OCI-LY7 (cell line): ENCODE measurements at regions of chr2 and their contacts with region 1.

Region 1: GRCh38 chr2:27356382-27357181 is at the start of gene GTF3C2:
- DNase-seq: peak; percentile 99
- H3K4me3 ChIP-seq: peak within 1 kb of the TSS; percentile 77
- H3K27ac ChIP-seq: peak within 1 kb of the TSS; percentile 88
- H3K4me1 ChIP-seq: peaks cover 29% of the 10 kb centered on the region
- CTCF ChIP-seq: no peak
- total RNA-seq, gene GTF3C2: 54.2 and 56.9 TPM in 2 replicates

Region 2: DNA sequence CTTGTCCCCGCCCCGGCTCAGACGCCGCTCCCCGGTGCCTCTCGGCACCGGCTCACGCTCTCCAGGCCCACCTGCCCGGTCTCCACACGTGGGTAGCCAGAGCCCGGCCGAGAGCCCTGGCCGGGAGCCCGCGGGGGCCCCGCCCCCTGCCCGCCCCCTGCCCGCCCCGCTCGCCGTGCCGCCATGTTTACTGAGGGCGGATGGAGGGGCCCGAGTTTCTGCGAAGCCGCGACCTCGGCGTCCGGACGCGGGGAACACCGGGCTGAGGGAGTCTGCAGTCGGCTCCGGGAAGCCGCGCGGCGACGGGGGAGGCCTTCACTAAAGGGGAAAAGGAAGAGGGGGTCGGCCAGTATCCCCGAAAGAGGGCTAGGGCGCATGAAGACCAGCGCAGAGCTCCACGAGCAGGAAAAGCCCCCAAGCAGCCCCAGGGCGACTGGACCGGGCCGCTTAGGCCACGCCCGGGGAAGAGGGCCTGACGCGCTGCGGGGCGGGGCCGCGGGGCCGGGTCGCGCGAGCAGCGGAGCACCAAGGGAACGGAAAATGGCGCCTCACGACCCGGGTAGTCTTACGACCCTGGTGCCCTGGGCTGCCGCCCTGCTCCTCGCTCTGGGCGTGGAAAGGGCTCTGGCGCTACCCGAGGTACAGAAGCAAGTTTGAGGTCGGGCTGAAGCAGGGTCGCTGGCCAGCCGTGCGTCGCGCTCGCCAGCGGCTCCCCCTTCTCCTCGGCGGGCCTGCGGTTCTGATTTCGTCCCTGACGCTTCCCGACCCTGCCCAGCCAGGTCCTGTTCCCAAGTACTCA is 144.6 kb before region 1 on chr2 and contains the starts of genes ATRAID and SLC5A6:
- CTCF ChIA-PET with region 1: no interaction called
- POLR2A ChIA-PET with region 1: no interaction called
- intact Hi-C with region 1: loop called (anchors 5 kb)
- DNase-seq: peak; percentile 92
- H3K4me3 ChIP-seq: peak within 1 kb of the TSS; percentile 90
- H3K27ac ChIP-seq: peak within 1 kb of the TSS; percentile 79
- H3K4me1 ChIP-seq: peaks cover 56% of the 10 kb centered on the region
- CTCF ChIP-seq: no peak
- total RNA-seq, gene ATRAID: 75.4 and 93.3 TPM in 2 replicates
- total RNA-seq, gene SLC5A6: 50.1 and 55.5 TPM in 2 replicates

Region 3: DNA sequence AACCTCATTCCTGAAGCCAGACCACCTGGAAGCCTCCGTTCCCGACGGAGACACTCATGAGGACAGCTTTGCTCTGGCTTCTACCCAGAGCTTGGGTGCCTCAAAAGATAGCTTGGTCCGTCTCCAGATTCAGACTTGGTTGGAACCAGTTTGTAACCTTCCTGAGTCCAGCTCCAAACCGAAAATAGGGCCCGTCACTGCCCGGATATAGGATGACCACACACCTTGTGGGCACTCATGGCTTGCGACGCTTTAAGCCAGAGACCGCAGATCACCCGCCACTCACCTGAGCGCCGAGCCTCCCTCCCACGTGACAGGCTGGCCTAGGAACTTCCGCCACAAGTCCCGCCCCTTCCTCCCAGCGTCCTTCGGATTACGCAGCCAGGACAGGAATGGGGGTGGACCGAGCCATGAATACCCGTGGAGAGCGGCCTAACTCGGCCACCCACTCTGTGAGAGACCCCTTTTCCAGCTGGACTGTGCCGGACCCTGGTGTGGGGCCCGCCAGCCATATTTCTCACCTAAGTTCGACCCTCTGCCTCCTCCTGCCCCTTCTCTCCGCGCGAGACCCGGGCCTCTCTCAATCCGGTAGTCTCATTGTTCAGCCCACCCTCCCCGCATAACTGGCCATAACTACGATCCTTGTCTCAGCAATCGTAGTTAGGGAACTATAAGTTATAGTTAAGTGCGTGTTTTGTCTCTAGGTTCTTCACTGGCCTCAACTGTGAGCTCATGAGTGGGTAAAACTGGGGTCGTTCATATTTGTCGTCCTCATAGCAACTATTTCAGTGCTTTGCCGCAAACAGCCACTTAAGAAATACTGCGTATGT is 33.6 kb before region 1 on chr2 and contains the start of gene MPV17:
- CTCF ChIA-PET with region 1: interaction called, 3 read pairs
- POLR2A ChIA-PET with region 1: interaction called, 3 read pairs
- intact Hi-C with region 1: loop called (anchors 5 kb)
- DNase-seq: peak; percentile 91
- H3K4me3 ChIP-seq: peak within 1 kb of the TSS; percentile 84
- H3K27ac ChIP-seq: peak within 1 kb of the TSS; percentile 58
- H3K4me1 ChIP-seq: peaks cover 16% of the 10 kb centered on the region
- CTCF ChIP-seq: no peak
- total RNA-seq, gene MPV17: 54.1 and 63.9 TPM in 2 replicates

Region 4: GRCh38 chr2:27471961-27472360 is 115.4 kb after region 1 on chr2:
- CTCF ChIA-PET with region 1: no interaction called
- POLR2A ChIA-PET with region 1: no interaction called
- intact Hi-C with region 1: no loop called
- DNase-seq: no peak
- H3K4me3 ChIP-seq: no peak overlapping the region
- H3K27ac ChIP-seq: no peak overlapping the region
- H3K4me1 ChIP-seq: no peaks in the 10 kb centered on the region
- CTCF ChIP-seq: no peak